Activated naive CD4-positive, alpha-beta T cell treated with anti-CD3 and anti-CD28 coated beads for 36 hours (primary cell): ENCODE measurements at regions of chr9 and their contacts with region 1.

Region 1: GRCh38 chr9:2241836-2242741 is 226.9 kb downstream of the SMARCA2 start:
- DNase-seq: peak; percentile 76
- H3K4me3 Mint-ChIP-seq: peak overlapping the region; percentile 73
- H3K27ac Mint-ChIP-seq: no peak overlapping the region
- H3K4me1 Mint-ChIP-seq: peaks cover 10% of the 10 kb centered on the region
- H3K27me3 Mint-ChIP-seq: peaks cover 17% of the 10 kb centered on the region

Region 2: DNA sequence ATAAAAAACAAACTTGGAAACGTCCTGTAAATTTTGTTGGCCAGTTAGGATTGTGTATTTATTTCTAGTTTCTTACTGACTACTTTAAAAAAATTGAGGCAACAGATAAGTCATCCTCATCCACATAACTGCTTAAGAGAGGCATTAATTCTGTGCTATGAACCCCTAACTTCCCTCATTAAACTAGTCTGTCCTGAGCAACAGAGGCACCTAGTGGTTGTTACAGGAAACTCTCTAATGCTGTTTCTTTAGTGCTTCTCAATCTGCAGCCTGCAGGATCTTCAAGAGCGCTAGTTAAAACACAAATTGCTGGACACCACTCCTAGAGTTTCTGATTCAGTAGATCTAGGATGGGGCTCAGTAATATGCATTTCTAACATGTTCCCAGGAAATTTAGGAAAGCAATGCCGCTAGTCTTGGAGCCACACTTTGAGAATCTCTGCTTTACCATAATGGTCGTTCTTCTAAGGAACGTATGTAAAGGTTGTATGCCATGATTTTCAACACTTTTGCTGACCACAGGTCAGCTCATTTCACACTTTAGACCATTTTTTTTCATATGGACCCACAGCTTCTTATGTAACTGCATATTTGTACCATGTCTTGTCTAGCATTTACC is 637.0 kb before region 1 on chr9:
- CTCF ChIA-PET with region 1: no interaction called
- intact Hi-C with region 1: no loop called
- DNase-seq: peak; percentile 5
- H3K4me3 Mint-ChIP-seq: no peak overlapping the region
- H3K27ac Mint-ChIP-seq: no peak overlapping the region
- H3K4me1 Mint-ChIP-seq: no peaks in the 10 kb centered on the region
- H3K27me3 Mint-ChIP-seq: peaks cover 9% of the 10 kb centered on the region

Region 3: GRCh38 chr9:2125906-2126305 is 116.2 kb before region 1 on chr9:
- CTCF ChIA-PET with region 1: no interaction called
- intact Hi-C with region 1: loop called (anchors 1 kb)
- DNase-seq: no peak
- H3K4me3 Mint-ChIP-seq: peak overlapping the region; percentile 46
- H3K27ac Mint-ChIP-seq: peak overlapping the region; percentile 85
- H3K4me1 Mint-ChIP-seq: peaks cover 31% of the 10 kb centered on the region
- H3K27me3 Mint-ChIP-seq: no peaks in the 10 kb centered on the region

Region 4: DNA sequence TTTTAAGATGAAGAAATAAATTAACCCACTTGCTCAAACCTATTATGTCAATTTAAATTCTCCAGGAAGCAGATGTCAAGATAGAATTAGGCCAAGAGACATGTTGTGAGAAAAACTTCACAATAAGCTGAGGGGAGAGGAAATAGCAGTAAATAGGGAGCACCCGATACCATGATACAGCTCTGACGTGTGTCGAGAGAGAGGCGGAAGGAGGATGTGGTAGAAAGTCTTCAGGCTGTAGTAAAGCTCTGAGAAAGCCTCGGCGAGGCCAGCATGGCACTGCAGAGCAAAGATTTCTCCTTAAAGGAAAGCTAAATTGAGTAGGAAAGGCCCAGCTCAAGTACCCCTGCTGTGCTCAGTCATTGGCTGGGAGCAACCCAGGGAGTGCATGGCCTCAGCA is 607.9 kb after region 1 on chr9:
- CTCF ChIA-PET with region 1: no interaction called
- intact Hi-C with region 1: loop called (anchors 2 kb)
- DNase-seq: no peak
- H3K4me3 Mint-ChIP-seq: no peak overlapping the region
- H3K27ac Mint-ChIP-seq: no peak overlapping the region
- H3K4me1 Mint-ChIP-seq: peaks cover 9% of the 10 kb centered on the region
- H3K27me3 Mint-ChIP-seq: peaks cover 5% of the 10 kb centered on the region